ENCODE measurements at regions of chr3 and their contacts with region 1.

Region 1: DNA sequence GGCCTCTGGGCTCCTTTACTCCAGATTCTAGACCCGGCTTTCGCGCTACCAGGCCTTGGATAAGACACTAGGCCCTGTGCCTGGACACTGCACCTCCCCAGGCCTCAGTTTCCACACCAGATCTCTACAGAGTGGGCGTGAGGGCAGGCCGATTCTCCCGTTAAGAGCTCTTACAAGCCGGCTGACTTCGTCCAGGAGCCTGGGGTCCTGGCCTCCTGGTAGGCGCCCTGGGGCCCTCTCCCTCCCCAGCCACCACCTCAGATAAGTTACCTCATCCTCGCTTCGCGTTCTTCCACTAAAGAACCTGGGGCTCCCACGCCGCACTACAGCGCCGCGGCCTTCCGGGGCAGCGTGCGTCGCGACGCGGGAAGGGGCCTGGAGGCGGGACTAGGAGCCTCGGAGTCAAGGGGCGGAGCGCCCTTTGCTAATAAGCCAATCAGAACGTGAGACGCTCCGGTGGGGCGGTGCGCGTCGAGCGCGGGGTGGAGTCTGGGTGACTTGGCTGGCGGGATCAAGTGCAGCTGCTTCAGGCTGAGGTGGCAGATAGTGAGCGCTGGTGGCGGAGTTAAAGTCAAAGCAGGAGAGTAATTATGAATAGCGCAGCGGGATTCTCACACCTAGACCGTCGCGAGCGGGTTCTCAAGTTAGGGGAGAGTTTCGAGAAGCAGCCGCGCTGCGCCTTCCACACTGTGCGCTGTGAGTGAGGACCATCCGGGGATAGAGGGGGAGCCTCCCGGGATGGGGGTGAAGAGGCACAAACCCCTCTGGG is at the starts of genes EAF2 and IQCB1:
- DNase-seq: peak; percentile 86 to 96
- H3K4me3 ChIP-seq: peak within 1 kb of the TSS; percentile 94
- H3K27ac ChIP-seq: peak within 1 kb of the TSS; percentile 40
- H3K4me1 ChIP-seq: peaks cover 11% of the 10 kb centered on the region; the same call in 1 of the 2 replicates
- H3K27me3 ChIP-seq: no peaks in the 10 kb centered on the region
- CTCF ChIP-seq: no peak; the same call in 1 of the 2 replicates
- total RNA-seq, gene EAF2: 0.90 and 2.0 TPM in 2 replicates
- total RNA-seq, gene IQCB1: 14.6 and 14.8 TPM in 2 replicates

Region 2: DNA sequence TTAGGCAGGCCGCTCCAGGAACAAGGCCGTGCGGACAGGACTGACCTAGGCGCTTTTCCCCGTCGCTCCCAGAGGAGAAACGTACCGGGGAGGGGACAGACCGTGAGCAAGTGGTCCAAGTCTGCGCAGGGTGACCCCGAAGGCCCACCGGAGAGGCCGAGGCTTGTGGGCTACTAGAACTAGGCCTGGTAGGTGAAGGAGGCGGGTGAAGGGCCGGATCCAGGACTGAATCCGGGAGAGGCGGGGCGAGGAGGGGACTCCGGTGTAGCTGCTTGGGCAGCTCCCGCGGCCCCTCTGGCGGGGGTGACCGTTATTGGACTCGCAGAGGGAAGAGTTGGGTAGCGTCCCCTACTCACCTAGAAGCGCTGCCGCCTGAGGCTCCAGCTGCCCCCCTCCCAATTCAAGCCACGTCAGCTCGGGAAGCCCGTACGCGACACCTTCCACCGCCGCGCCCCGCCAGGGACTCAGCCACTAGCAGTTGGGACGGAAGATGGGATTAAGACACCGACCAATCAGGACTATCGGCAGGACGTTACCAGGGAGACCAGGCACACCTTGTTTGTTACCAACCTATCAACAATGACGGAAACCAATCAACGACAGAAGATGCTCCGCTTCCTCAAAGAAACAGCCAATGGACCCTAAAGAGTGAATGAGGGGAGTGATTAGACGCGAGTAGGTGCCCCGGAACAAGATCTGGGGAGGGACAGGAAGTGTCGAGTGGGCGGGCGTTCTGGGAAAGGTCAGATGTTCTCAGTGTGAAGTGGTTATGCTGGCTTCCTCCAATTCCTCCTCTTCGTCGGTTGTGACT is 85.4 kb before region 1 on chr3 and contains the start of gene GOLGB1:
- CTCF ChIA-PET with region 1: no interaction called
- POLR2A ChIA-PET with region 1: interaction called, 6 read pairs
- intact Hi-C with region 1: loop called (anchors 2 kb)
- DNase-seq: peak; percentile 94 to 100
- H3K4me3 ChIP-seq: peak within 1 kb of the TSS; percentile 75
- H3K27ac ChIP-seq: peak within 1 kb of the TSS; percentile 72
- H3K4me1 ChIP-seq: peaks cover 33% of the 10 kb centered on the region
- H3K27me3 ChIP-seq: no peaks in the 10 kb centered on the region
- CTCF ChIP-seq: no peak
- total RNA-seq, gene GOLGB1: 60.8 and 73.1 TPM in 2 replicates

Region 3: DNA sequence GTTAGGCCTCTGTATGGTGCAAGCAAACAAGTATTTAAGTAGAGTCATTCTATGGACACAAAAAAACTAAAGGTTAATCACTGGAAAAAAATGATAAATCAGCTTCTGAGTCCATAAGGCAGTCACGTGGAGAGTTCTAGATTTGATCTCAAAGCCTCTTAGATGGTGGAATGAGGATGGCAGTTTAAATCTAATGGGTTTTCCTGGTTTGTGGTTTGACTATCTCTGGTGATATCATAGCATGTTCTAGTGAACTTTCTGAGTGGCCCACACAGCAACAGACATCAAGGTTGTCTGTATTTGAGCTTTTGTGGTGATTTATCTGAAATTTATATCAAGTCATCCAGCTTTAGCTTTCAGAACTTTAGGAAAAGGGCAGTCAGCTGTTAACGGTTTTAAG is 134.8 kb after region 1 on chr3:
- CTCF ChIA-PET with region 1: no interaction called
- POLR2A ChIA-PET with region 1: interaction called, 12 read pairs
- intact Hi-C with region 1: no loop called
- DNase-seq: peak in 1 of 2 experiments; percentile 35
- H3K4me3 ChIP-seq: no peak overlapping the region
- H3K27ac ChIP-seq: no peak overlapping the region
- H3K4me1 ChIP-seq: no peaks in the 10 kb centered on the region
- H3K27me3 ChIP-seq: no peaks in the 10 kb centered on the region
- CTCF ChIP-seq: no peak

Region 4: DNA sequence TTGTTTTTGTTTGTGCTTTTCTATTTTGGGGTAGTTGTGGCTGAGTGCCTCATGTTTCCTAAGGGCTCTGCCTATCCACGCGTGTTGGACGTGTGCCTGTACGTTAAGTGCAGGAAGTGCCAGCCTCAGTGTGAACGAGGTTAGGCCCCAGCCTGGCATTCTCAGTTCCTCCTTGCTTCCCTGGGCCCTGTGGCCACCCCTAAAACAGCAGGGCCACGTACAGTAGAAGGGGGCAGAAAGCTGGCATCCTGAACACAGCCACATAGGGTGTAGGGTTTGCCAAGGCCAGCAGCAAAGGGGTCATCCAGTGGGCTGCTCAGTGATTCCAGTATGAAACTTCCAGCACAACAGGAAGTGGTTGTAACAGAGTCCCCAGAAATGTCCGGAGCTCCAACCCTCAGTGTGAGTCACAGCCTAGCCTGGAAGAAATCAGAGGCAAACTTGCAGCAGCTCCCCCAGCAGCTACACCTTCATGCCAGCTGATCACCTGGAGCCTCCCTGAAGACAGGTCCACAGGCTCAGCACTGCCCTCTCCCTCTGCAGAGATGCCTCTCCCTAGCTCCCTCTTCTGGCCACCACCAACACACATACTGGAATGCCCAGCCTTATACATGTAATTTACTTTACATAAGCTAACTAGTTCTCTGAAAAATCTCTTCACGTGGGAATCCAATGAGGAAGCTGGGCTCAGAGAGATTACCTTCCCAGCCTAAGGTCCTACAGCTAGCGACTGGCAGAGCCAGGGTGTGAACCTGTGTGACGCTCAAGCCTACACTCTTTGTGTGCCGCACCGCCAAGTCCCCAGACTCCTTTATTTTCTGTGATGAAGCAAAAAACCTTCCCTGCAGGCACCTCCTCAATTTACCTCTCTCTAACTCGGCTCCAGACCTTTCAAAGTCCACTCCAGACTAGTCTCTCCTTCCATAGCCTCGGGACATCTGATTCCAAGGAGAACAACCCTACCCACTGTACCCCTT is 160.6 kb after region 1 on chr3:
- CTCF ChIA-PET with region 1: no interaction called
- POLR2A ChIA-PET with region 1: no interaction called
- intact Hi-C with region 1: loop called (anchors 1 kb)
- DNase-seq: peak; percentile 74 to 84
- H3K4me3 ChIP-seq: no peak overlapping the region
- H3K27ac ChIP-seq: peak overlapping the region; percentile 56
- H3K4me1 ChIP-seq: peaks cover 12% of the 10 kb centered on the region; the same call in 1 of the 2 replicates
- H3K27me3 ChIP-seq: no peaks in the 10 kb centered on the region
- CTCF ChIP-seq: peak; percentile 69

Region 5: GRCh38 chr3:122365073-122365472 is 530.2 kb after region 1 on chr3:
- CTCF ChIA-PET with region 1: no interaction called
- POLR2A ChIA-PET with region 1: no interaction called
- intact Hi-C with region 1: loop called (anchors 10 kb)
- DNase-seq: no peak
- H3K4me3 ChIP-seq: peak overlapping the region; percentile 22; the same call in 1 of the 2 replicates
- H3K27ac ChIP-seq: peak overlapping the region; percentile 96
- H3K4me1 ChIP-seq: peaks cover 31% of the 10 kb centered on the region
- H3K27me3 ChIP-seq: no peaks in the 10 kb centered on the region
- CTCF ChIP-seq: no peak